ENCODE measurements at regions of chr3 and their contacts with region 1.

Region 1: GRCh38 chr3:12175844-12176453 is 17.2 kb upstream of the TIMP4 start:
- DNase-seq: peak; percentile 76
- H3K4me3 ChIP-seq: no peak overlapping the region
- H3K27ac ChIP-seq: no peak overlapping the region
- H3K4me1 ChIP-seq: no peaks in the 10 kb centered on the region
- H3K27me3 ChIP-seq: no peaks in the 10 kb centered on the region
- CTCF ChIP-seq: peak; percentile 86

Region 2: GRCh38 chr3:11770477-11771391 is 405.2 kb before region 1 on chr3:
- intact Hi-C with region 1: no loop called
- DNase-seq: peak; percentile 92
- H3K4me3 ChIP-seq: no peak overlapping the region
- H3K27ac ChIP-seq: peak overlapping the region; percentile 88
- H3K4me1 ChIP-seq: peaks cover 9% of the 10 kb centered on the region
- H3K27me3 ChIP-seq: no peaks in the 10 kb centered on the region
- CTCF ChIP-seq: no peak

Region 3: DNA sequence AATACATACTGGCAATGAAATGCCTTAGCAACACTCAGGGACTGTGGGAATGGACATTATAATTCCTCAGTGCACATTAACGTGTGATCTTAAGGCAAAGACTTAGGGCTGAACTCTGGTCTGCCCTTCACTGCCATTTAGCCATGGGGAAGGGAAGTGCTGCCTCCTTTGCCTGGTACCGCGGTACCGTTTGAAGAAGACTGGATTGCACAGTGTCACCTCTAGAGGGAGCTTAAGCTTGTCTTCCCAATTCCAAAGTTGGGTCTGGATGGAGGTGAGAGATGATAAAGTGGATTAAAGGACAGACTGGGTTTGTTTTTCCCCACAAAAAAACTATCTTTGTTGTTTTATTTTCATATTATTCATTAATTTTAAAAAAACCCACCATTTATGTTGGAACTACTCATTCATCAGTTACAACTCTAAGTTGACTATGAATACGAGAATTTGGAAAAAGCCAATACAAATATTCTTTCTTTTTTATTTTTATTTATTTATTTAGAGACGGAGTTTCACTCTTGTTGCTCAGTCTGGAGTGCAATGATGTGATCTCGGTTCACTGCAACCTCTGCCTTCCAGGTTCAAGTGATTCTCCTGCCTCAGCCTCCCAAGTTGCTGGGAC is 231.8 kb before region 1 on chr3:
- intact Hi-C with region 1: loop called (anchors 10 kb)
- DNase-seq: peak; percentile 26
- H3K4me3 ChIP-seq: no peak overlapping the region
- H3K27ac ChIP-seq: no peak overlapping the region
- H3K4me1 ChIP-seq: no peaks in the 10 kb centered on the region
- H3K27me3 ChIP-seq: no peaks in the 10 kb centered on the region
- CTCF ChIP-seq: peak; percentile 47

Region 4: DNA sequence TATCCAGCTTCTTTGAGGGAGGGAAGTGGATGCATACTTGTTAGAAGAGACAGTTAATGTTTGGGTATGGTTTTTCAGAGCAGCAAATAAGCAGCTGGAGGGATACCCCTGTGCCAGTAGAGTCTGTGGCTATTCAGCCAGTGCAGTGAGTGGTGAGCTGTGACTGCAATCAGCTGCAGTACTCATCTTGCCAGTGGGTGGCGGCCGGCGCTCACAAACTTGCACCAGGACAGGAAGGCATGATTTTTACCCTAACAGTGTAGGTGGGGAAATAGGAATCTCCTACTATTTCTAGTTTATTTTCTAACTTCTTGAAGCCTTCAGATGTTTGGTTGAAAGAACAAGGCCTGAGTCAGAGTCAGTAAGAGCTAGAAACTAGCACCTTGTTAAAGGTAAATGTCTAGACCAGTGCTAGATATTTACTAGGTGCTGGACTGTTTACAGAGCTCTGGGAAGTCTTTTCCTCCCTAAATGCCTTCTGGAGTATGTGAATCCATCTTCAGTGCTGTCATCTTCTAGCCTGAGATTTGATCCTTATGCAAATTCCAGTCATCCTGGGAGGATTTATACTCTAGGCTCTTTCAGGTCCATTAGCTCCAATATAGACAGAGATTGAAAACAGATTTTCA is 40.8 kb before region 1 on chr3:
- intact Hi-C with region 1: loop called (anchors 2 kb)
- DNase-seq: peak; percentile 81
- H3K4me3 ChIP-seq: no peak overlapping the region
- H3K27ac ChIP-seq: no peak overlapping the region
- H3K4me1 ChIP-seq: no peaks in the 10 kb centered on the region
- H3K27me3 ChIP-seq: no peaks in the 10 kb centered on the region
- CTCF ChIP-seq: peak; percentile 85

Region 5: GRCh38 chr3:12484198-12484974 is 308.4 kb after region 1 on chr3 and contains the start of gene TSEN2:
- intact Hi-C with region 1: loop called (anchors 10 kb)
- DNase-seq: peak; percentile 93
- H3K4me3 ChIP-seq: peak within 1 kb of the TSS; percentile 72
- H3K27ac ChIP-seq: peak within 1 kb of the TSS; percentile 75
- H3K4me1 ChIP-seq: peaks cover 19% of the 10 kb centered on the region
- H3K27me3 ChIP-seq: no peaks in the 10 kb centered on the region
- CTCF ChIP-seq: no peak
- total RNA-seq, gene TSEN2: 13.7 to 21.1 TPM

Region 6: DNA sequence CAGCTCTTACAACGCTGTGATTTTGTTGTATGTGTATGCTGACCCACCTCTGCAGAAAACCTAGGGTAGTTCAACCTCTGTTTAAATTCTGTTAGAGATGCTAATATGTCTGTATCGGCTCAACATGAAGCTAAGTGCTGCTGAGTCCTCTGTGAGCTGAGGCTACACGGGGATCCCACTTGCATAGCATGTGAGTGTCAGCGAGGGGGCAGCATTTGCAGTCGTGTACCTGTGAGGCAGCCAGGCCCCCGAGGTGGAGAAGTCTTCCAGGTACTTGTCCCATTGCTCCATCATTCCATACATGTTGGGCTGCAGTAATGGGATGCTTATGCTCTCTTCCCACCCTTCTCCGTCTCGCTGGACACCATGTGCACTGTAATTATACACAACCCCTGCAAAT is 365.7 kb after region 1 on chr3:
- intact Hi-C with region 1: no loop called
- DNase-seq: no peak
- H3K4me3 ChIP-seq: no peak overlapping the region
- H3K27ac ChIP-seq: no peak overlapping the region
- H3K4me1 ChIP-seq: no peaks in the 10 kb centered on the region
- H3K27me3 ChIP-seq: no peaks in the 10 kb centered on the region
- CTCF ChIP-seq: no peak